Sigmoid colon (tissue), 7 donors: ENCODE measurements at regions of chr14 and their contacts with region 1.

Region 1: GRCh38 chr14:45810152-45810872 is 557.3 kb upstream of the MIS18BP1 start:
- DNase-seq: no peak
- H3K4me3 ChIP-seq: no peak overlapping the region
- H3K27ac ChIP-seq: peak overlapping the region; percentile 6 to 75 (median 28)
- H3K4me1 ChIP-seq: peaks cover 0 to 46% (median 25%) of the 10 kb centered on the region in 4 donors
- H3K27me3 ChIP-seq: no peaks in the 10 kb centered on the region
- CTCF ChIP-seq: peak in 1 of 4 experiments; percentile 22
- EP300 ChIP-seq: no peak
- POLR2A ChIP-seq: no peak

Region 2: DNA sequence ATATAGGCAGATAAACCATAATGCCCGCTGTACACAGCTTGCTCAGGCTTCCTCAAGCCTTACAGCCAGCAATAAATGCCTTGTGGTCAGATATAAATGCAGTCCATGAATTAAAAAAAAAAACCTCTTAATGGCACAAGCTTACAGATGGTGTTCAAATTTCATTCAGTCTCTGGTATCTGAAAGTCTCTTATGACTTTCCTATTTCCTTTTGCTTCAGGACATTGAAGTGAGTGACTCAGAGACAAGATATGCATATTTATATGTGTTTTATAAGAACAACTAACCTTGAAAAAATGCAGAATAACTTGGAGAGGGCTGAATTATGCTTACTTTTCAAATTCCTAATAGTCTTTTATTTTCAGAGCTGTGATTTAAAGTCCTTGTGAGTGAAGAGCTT is 130.5 kb before region 1 on chr14:
- intact Hi-C with region 1: no loop called
- DNase-seq: no peak
- H3K4me3 ChIP-seq: no peak overlapping the region
- H3K27ac ChIP-seq: peak overlapping the region in 1 of 4 donors; percentile 38
- H3K4me1 ChIP-seq: peaks cover 0 to 23% (median 7%) of the 10 kb centered on the region in 4 donors
- H3K27me3 ChIP-seq: no peaks in the 10 kb centered on the region
- CTCF ChIP-seq: no peak
- EP300 ChIP-seq: no peak
- POLR2A ChIP-seq: no peak

Region 3: DNA sequence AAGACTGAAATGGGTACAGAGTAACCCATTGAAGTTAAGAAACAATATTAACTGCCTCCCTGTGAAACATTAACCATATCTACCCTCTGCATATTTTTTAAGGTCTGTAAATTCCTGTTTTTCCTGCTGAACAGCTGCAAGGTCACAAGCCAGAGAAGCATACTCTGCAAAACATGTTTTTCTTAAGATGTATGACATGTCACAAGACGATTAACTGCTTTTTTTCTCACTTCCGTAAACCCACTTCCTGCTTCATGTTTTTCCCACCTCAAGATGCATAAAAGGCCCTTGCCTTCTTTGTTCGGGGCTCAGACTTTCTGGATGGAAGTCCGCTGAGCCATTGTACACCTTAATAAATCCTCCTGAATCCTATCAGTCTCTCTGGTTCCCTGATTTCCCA is 52.7 kb before region 1 on chr14:
- intact Hi-C with region 1: no loop called
- DNase-seq: no peak
- H3K4me3 ChIP-seq: no peak overlapping the region
- H3K27ac ChIP-seq: no peak overlapping the region
- H3K4me1 ChIP-seq: no peaks in the 10 kb centered on the region
- H3K27me3 ChIP-seq: no peaks in the 10 kb centered on the region
- CTCF ChIP-seq: no peak
- EP300 ChIP-seq: no peak
- POLR2A ChIP-seq: no peak

Region 4: DNA sequence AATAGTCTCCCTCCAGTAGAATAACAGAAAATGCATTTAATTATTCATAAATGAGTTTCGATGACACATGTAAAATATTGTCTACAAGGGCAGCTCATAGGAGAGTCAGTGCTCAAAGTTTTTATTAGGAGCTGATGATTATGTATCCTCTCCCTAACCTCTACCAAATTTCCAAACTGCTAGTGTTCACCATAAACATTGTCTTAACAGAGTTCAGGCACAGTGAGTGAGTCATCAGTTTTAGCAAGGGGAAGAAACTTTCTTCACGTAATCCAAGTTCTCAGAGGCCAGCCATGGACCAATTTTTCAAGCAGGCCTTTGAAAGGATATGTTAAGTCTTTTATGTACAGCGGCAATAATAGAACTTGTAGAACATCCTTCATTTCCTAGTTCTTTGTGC is 91.9 kb after region 1 on chr14:
- intact Hi-C with region 1: loop called (anchors 5 kb)
- DNase-seq: no peak
- H3K4me3 ChIP-seq: no peak overlapping the region
- H3K27ac ChIP-seq: peak overlapping the region in 3 of 4 donors; percentile 59 to 67 (median 63)
- H3K4me1 ChIP-seq: peaks cover 0 to 43% (median 32%) of the 10 kb centered on the region in 4 donors
- H3K27me3 ChIP-seq: no peaks in the 10 kb centered on the region
- CTCF ChIP-seq: no peak
- EP300 ChIP-seq: peak in 1 of 4 donors; percentile 4
- POLR2A ChIP-seq: no peak